Spleen (tissue), 13 donors: ENCODE measurements at regions of chr11 and their contacts with region 1.

Region 1: DNA sequence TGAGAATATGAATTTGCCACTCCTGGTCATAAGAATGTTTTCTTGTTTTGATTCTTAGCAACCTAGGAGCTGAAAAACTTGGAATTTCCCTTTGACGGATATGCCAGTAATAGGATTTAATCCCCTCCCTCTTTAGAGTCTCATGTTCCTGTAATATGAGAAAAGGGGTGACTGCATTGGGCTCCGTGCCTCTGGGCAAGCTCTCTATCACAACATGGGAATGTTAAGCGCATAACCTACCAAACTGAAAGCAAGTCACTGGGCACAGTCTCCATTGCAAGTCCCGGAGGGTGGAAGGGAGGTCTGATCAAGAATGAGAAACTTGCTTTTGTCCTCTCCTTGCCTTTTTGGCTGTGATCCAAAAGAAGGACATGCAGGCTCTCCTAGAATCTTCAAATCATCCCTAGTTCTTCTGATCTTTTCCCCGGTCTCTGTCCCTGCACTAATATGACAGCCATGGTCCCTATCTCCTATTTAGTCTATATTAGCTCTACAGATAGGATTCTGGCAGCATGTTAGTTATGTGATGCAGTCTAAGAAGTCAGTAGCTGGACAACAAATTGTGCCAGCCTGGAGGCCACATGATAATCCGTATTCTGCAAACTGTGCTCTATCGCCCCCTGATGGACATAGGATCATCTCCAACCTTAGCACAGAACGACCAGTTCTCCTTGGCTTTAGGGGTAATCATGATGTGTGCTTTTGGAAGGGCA is 11.7 kb downstream of the OR10D3 start:
- DNase-seq: no peak
- H3K4me3 ChIP-seq: no peak overlapping the region
- H3K27ac ChIP-seq: peak overlapping the region in 4 of 8 donors; percentile 13 to 48 (median 40)
- H3K4me1 ChIP-seq: peaks cover 0 to 6% (median 0%) of the 10 kb centered on the region in 6 donors
- H3K27me3 ChIP-seq: peaks cover 0 to 6% (median 0%) of the 10 kb centered on the region in 7 donors
- CTCF ChIP-seq: peak; percentile 12 to 67 (median 48)
- POLR2A ChIP-seq: no peak

Region 2: GRCh38 chr11:124075841-124076651 is 118.8 kb before region 1 on chr11:
- intact Hi-C with region 1: loop called (anchors 5 kb)
- DNase-seq: peak; percentile 77
- H3K4me3 ChIP-seq: peak overlapping the region in 7 of 8 donors; percentile 27 to 69 (median 34)
- H3K27ac ChIP-seq: peak overlapping the region in 3 of 8 donors; percentile 10 to 32 (median 27)
- H3K4me1 ChIP-seq: peaks cover 0 to 26% (median 19%) of the 10 kb centered on the region in 6 donors
- H3K27me3 ChIP-seq: peaks cover 0 to 28% (median 8%) of the 10 kb centered on the region in 7 donors
- CTCF ChIP-seq: no peak
- POLR2A ChIP-seq: no peak

Region 3: DNA sequence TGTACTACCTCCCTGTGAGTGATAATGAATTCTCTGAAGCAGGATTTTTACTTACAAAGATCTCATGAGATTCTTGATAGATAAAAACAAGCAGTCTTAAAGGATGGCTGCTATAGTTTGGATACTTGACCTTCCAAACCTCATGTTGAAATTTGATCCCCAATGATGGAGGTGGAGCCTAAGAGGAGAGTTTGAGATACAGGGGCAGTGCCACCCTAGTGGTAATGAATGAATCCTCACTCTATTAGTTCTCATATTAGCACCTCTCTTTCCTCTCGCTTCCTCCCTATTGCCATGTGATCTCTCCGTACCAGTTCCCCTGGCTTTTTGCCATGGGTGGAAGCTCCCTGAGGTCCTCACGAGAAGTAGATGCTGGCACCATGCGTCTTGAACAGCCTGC is 288.6 kb after region 1 on chr11:
- intact Hi-C with region 1: no loop called
- DNase-seq: no peak
- H3K4me3 ChIP-seq: no peak overlapping the region
- H3K27ac ChIP-seq: no peak overlapping the region
- H3K4me1 ChIP-seq: peaks cover 0 to 12% (median 2%) of the 10 kb centered on the region in 6 donors
- H3K27me3 ChIP-seq: peaks cover 0 to 23% (median 0%) of the 10 kb centered on the region in 7 donors
- CTCF ChIP-seq: no peak
- POLR2A ChIP-seq: no peak

Region 4: GRCh38 chr11:124577716-124578427 is 383.0 kb after region 1 on chr11:
- intact Hi-C with region 1: no loop called
- DNase-seq: no peak
- H3K4me3 ChIP-seq: no peak overlapping the region
- H3K27ac ChIP-seq: no peak overlapping the region
- H3K4me1 ChIP-seq: no peaks in the 10 kb centered on the region
- H3K27me3 ChIP-seq: peaks cover 0 to 6% (median 0%) of the 10 kb centered on the region in 7 donors
- CTCF ChIP-seq: no peak
- POLR2A ChIP-seq: no peak

Region 5: GRCh38 chr11:125382314-125382791 is 1187.5 kb after region 1 on chr11:
- intact Hi-C with region 1: no loop called
- DNase-seq: peak; percentile 50
- H3K4me3 ChIP-seq: no peak overlapping the region
- H3K27ac ChIP-seq: no peak overlapping the region
- H3K4me1 ChIP-seq: no peaks in the 10 kb centered on the region
- H3K27me3 ChIP-seq: peaks cover 0 to 51% (median 0%) of the 10 kb centered on the region in 7 donors
- CTCF ChIP-seq: no peak
- POLR2A ChIP-seq: no peak